GM12878 (cell line): ENCODE measurements at regions of chr6 and their contacts with region 1.

Region 1: DNA sequence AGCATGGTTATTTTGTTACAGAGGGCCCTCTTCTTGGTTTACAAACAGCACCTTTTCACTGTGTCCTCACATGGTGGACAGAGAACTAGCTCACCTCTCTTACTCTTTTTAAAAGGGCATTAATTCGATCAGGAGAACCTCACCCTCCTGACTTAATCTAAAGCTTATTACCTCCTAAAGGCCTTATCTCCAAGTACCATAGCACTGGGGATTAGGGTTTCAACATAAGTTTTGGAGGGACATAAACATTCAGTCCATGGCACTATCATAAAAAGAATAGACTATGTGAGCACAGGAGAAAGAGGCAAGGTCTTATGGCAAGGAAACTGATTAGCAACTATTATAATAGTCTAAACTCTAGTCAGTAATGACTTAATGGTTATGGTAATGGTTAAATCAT is 736.2 kb upstream of the ADGRB3 start:
- DNase-seq: no peak
- ATAC-seq: no peak
- H3K4me3 ChIP-seq: no peak overlapping the region
- H3K27ac ChIP-seq: no peak overlapping the region
- H3K4me1 ChIP-seq: no peaks in the 10 kb centered on the region
- H3K27me3 ChIP-seq: no peaks in the 10 kb centered on the region
- CTCF ChIP-seq: no peak
- EP300 ChIP-seq: no peak
- POLR2A ChIP-seq: no peak
- RAD21 ChIP-seq: no peak

Region 2: DNA sequence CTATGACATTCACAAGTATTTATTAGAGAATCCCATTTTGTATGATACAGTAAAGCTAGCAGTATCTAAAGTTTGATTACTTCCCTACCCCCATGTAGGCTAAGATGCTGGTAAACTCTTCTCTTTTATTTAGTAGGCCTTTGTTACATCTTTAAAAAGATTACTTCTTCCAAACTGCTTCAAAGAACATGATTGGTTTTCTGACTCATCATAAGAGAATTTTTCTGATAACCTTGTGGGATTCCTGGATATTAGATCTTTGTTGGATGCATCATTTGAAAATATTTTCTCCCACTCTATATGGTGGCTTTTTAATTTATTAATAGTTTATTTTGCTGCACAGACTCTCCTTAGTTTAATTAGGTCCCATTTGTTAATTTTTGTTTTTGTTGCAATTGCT is 162.1 kb before region 1 on chr6:
- CTCF ChIA-PET with region 1: no interaction called
- POLR2A ChIA-PET with region 1: no interaction called
- RAD21 ChIA-PET with region 1: no interaction called
- SMC1A ChIA-PET with region 1: no interaction called
- in situ Hi-C with region 1: no loop called
- intact Hi-C with region 1: no loop called
- DNase-seq: no peak
- ATAC-seq: no peak
- H3K4me3 ChIP-seq: no peak overlapping the region
- H3K27ac ChIP-seq: no peak overlapping the region
- H3K4me1 ChIP-seq: no peaks in the 10 kb centered on the region
- H3K27me3 ChIP-seq: no peaks in the 10 kb centered on the region
- CTCF ChIP-seq: no peak
- EP300 ChIP-seq: no peak
- POLR2A ChIP-seq: no peak
- RAD21 ChIP-seq: no peak

Region 3: DNA sequence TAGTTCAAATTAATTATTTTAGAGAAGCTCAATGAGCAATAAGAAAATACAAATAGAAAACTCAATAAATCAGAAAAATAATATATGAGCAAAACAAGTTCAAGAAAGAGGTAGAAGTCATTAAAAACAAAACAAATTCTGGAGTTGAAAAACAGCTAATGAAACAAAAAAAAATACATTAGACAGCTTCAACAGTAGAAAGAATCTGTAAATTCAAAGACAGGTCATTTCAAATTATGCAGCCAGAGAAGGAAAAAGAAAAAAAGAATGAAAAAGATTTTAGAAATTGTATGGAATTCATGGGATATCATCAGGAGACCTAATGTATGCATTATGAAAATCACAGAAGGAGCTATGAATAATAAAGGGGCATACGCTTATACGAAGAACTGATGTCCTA is 59.1 kb before region 1 on chr6:
- CTCF ChIA-PET with region 1: no interaction called
- POLR2A ChIA-PET with region 1: no interaction called
- RAD21 ChIA-PET with region 1: no interaction called
- SMC1A ChIA-PET with region 1: no interaction called
- in situ Hi-C with region 1: no loop called
- intact Hi-C with region 1: no loop called
- DNase-seq: no peak
- ATAC-seq: no peak
- H3K4me3 ChIP-seq: no peak overlapping the region
- H3K27ac ChIP-seq: no peak overlapping the region
- H3K4me1 ChIP-seq: no peaks in the 10 kb centered on the region
- H3K27me3 ChIP-seq: no peaks in the 10 kb centered on the region
- CTCF ChIP-seq: no peak
- EP300 ChIP-seq: no peak
- POLR2A ChIP-seq: no peak
- RAD21 ChIP-seq: no peak

Region 4: GRCh38 chr6:67877288-67877687 is 21.6 kb before region 1 on chr6:
- CTCF ChIA-PET with region 1: no interaction called
- POLR2A ChIA-PET with region 1: no interaction called
- RAD21 ChIA-PET with region 1: no interaction called
- SMC1A ChIA-PET with region 1: no interaction called
- in situ Hi-C with region 1: no loop called
- intact Hi-C with region 1: no loop called
- DNase-seq: no peak
- ATAC-seq: no peak
- H3K4me3 ChIP-seq: no peak overlapping the region
- H3K27ac ChIP-seq: no peak overlapping the region
- H3K4me1 ChIP-seq: no peaks in the 10 kb centered on the region
- H3K27me3 ChIP-seq: no peaks in the 10 kb centered on the region
- CTCF ChIP-seq: no peak
- EP300 ChIP-seq: no peak
- POLR2A ChIP-seq: no peak
- RAD21 ChIP-seq: no peak

Region 5: GRCh38 chr6:67916399-67916798 is 17.5 kb after region 1 on chr6:
- CTCF ChIA-PET with region 1: no interaction called
- POLR2A ChIA-PET with region 1: no interaction called
- RAD21 ChIA-PET with region 1: no interaction called
- SMC1A ChIA-PET with region 1: interaction called, 3 read pairs
- in situ Hi-C with region 1: no loop called
- intact Hi-C with region 1: loop called (anchors 2 kb)
- DNase-seq: no peak
- ATAC-seq: no peak
- H3K4me3 ChIP-seq: no peak overlapping the region
- H3K27ac ChIP-seq: no peak overlapping the region
- H3K4me1 ChIP-seq: no peaks in the 10 kb centered on the region
- H3K27me3 ChIP-seq: no peaks in the 10 kb centered on the region
- CTCF ChIP-seq: no peak
- EP300 ChIP-seq: no peak
- POLR2A ChIP-seq: no peak
- RAD21 ChIP-seq: no peak